ENCODE measurements at regions of chr18 and their contacts with region 1.

Region 1: DNA sequence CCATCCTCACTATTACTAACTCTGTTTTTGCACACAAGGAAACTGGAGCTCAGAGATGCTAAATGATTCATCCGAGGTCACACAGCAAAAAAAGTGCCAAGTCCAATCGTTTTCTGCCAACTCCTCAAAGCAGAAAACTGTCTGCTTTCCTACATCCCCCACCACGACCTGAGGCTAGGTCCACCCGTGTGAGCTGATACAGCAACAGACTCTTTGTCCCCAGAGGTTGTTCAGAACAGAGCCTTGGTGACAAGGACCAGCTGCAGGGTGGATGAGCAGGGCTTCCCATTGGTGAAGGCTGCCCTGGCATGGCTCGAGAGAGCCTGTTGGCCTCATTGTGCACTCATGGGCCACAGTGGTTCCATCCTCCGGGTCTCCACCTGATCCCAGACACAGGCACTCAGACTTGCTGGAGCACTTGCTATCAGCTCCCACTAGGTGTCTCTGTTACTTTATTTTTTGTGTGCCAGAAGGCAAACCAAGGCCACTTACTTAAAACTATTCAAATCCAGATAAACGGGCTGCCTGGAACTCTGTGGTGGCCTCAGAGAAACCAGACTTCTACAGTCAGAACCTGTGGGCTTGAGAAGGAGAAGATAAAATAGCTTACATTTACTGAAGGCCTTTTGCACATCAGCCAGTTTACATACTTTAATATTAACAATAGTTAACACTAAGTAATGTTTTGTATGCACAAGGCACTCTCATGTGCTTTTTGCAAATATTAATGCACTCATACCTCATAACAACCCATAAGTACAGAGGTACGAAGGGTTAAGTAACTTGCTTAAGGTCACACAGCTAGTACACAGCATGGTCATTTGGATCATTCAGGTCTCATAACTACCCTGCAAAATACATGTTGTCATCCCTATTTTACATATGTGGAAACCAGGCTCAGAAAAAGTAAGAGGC is 62.9 kb upstream of the CTIF start:
- DNase-seq: peak; percentile 82
- ATAC-seq: peak; percentile 96
- H3K4me3 ChIP-seq: no peak overlapping the region
- H3K27ac ChIP-seq: no peak overlapping the region
- H3K4me1 ChIP-seq: no peaks in the 10 kb centered on the region
- H3K27me3 ChIP-seq: peaks cover 12% of the 10 kb centered on the region
- CTCF ChIP-seq: peak; percentile 86
- POLR2A ChIP-seq: no peak
- RAD21 ChIP-seq: peak; percentile 97

Region 2: DNA sequence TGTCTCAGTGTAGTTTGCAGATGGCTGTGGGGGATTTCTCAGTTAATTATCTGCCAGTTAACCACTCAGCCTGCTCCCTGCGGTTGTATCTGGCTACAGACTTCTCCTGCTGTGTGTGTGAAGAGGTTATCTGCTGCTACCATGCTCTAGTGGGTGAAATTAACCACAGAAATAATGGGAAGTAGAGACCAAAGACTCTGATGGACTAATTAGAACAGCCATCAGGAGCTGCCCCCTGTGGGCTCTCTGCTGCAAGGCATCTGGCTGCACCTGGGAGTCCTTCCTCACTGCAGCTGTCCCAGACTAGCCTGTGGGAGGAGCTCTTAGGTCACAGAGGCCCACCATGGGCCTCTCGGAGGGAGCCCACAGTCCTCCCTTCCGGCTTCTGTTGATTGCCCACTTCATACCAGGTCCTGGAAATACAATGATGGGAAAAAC is 129.5 kb after region 1 on chr18:
- CTCF ChIA-PET with region 1: interaction called, 6 read pairs
- POLR2A ChIA-PET with region 1: no interaction called
- dilution Hi-C with region 1: no loop called
- in situ Hi-C with region 1: no loop called
- intact Hi-C with region 1: loop called (anchors 1 kb)
- DNase-seq: peak; percentile 43
- ATAC-seq: no peak
- H3K4me3 ChIP-seq: no peak overlapping the region
- H3K27ac ChIP-seq: no peak overlapping the region
- H3K4me1 ChIP-seq: peaks cover 24% of the 10 kb centered on the region
- H3K27me3 ChIP-seq: no peaks in the 10 kb centered on the region
- CTCF ChIP-seq: peak; percentile 49
- POLR2A ChIP-seq: no peak
- RAD21 ChIP-seq: peak; percentile 38

Measured in IMR-90 (cell line).